ENCODE measurements at regions of chr7 and their contacts with region 1.

Region 1: GRCh38 chr7:75738987-75739795 is 450 bp upstream of the HIP1 start:
- DNase-seq: peak; percentile 97
- ATAC-seq: peak; percentile 96
- H3K4me3 ChIP-seq: peak overlapping the region; percentile 95
- H3K27ac ChIP-seq: peak overlapping the region; percentile 14; the same call in 1 of the 2 replicates
- H3K4me1 ChIP-seq: no peaks in the 10 kb centered on the region
- H3K27me3 ChIP-seq: no peaks in the 10 kb centered on the region
- CTCF ChIP-seq: no peak

Region 2: DNA sequence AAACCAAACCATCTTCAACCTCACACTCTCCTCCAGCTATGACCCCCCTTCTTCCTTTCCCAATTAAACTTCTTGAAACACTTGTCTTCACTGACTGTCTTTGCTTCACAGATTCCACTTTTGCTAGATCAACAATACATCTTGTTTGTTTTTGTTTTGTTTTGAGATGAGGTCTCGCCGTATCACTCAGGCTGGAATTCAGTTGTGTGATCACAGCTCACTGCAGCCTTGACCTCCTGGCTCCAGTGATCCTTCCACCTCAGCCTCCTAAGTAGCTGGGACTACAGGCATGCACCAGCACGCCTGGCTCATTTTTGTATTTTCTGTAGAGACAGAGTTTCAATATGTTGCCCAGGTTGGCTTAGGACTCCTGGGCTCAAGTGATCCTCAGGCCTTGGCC is 60.1 kb before region 1 on chr7:
- CTCF ChIA-PET with region 1: no interaction called
- POLR2A ChIA-PET with region 1: no interaction called
- intact Hi-C with region 1: loop called (anchors 10 kb)
- DNase-seq: no peak
- ATAC-seq: no peak
- H3K4me3 ChIP-seq: no peak overlapping the region
- H3K27ac ChIP-seq: no peak overlapping the region
- H3K4me1 ChIP-seq: peaks cover 11% of the 10 kb centered on the region
- H3K27me3 ChIP-seq: no peaks in the 10 kb centered on the region
- CTCF ChIP-seq: no peak

Region 3: DNA sequence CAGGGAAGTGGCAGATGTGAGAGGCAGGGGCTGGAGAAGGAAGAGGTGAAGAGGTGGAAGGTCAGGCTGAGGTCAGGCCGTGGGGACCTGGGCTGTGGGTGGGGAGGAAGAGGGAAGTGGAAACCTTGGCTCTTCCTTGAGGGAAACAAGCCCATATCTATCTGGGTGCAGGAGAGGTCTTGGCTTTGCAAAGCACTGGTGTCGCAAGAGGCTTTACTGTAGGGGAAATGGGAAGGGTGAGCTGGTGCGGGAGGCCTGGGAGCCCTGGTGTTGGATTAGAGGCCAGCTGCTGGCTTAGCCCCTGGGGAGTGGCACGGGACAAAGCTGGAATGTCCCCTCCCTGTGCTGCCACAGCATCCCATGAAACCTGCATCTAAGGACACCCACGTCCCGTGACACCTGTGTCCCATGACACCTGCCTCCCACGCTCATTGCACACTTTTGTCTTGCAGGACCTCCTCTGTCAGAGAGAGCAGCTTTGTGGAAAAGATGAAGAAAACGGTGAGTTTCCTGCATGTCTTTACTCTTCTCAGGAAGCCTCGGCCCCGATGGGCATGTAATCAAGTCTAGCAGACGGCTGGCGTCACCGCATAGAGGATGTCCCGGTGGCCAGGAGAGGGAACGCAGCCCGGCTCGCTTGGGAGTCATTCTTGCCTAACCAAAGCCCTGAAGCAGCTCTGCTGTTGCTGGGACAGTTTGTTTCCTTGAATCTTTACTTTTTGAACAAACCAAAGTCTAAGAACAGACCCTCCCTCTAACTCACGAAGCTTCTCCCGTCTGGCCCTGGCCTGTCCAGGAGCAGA is 233.0 kb after region 1 on chr7:
- CTCF ChIA-PET with region 1: no interaction called
- POLR2A ChIA-PET with region 1: no interaction called
- intact Hi-C with region 1: no loop called
- DNase-seq: no peak
- ATAC-seq: peak; percentile 50
- H3K4me3 ChIP-seq: no peak overlapping the region
- H3K27ac ChIP-seq: no peak overlapping the region
- H3K4me1 ChIP-seq: no peaks in the 10 kb centered on the region
- H3K27me3 ChIP-seq: no peaks in the 10 kb centered on the region
- CTCF ChIP-seq: no peak; the same call in 1 of the 2 replicates

Region 4: DNA sequence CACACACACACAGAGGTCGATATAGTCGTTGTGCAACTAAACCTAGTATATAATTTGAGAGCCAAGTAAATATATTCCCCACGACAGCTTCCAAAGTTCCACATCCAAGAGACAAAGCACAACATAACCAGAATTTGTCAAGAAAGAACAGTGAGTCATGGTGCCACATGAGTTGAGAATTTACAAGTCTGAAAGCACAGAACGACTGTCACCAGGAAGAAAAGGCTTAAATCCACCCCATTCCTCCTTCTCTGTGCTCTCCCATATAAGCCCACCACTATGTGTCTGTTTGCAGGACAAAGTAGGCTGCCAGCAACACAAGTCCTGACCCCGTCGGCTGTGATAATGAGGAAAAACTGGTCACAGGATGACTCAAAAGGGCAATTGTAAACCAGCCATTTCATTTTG is 1644.1 kb after region 1 on chr7:
- CTCF ChIA-PET with region 1: no interaction called
- POLR2A ChIA-PET with region 1: no interaction called
- intact Hi-C with region 1: no loop called
- DNase-seq: peak; percentile 13
- ATAC-seq: no peak
- H3K4me3 ChIP-seq: no peak overlapping the region
- H3K27ac ChIP-seq: no peak overlapping the region
- H3K4me1 ChIP-seq: no peaks in the 10 kb centered on the region
- H3K27me3 ChIP-seq: no peaks in the 10 kb centered on the region
- CTCF ChIP-seq: no peak

Measured in PC-3 (cell line).